WTC11 (cell line): ENCODE measurements at regions of chr11 and their contacts with region 1.

Region 1: DNA sequence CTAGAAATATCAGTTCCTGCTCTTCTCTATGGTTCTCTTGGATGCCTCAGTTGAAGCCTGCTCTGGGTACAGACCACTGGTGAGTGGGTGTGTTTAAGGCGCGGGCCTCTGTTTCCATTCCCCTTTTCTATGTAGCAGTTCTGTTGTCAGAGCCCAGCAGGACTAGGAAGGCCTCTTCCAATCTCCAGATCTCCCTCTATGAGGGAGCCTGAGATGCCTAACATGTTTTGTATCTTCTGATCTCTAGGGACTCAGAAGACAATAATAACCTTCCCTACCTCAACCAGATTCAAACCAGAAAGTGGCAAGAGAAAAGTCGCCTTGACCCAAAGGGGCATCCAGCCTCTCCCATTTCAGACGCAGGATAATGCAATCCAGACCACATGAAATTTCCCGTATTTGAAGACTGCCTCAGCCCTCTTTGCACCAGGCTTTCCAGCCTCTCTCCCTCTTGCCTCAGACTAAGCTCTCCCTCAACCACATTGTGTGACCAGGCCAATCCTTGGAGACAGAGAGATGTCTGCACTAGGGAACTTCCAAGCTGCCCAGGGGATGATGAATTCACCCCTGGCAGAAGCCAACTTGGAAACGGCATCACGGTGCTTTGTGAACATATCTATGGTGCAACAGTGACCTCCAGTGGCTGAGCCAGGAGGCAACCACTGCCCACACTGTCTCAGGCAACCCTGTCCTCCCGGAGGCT is 150.1 kb upstream of the UBASH3B start:
- DNase-seq: peak; percentile 82
- ATAC-seq: peak; percentile 96
- H3K4me3 Mint-ChIP-seq: no peak overlapping the region
- H3K27ac Mint-ChIP-seq: no peak overlapping the region
- H3K4me1 Mint-ChIP-seq: peaks cover 5% of the 10 kb centered on the region
- H3K27me3 Mint-ChIP-seq: no peaks in the 10 kb centered on the region
- CTCF ChIP-seq: peak; percentile 65

Region 2: DNA sequence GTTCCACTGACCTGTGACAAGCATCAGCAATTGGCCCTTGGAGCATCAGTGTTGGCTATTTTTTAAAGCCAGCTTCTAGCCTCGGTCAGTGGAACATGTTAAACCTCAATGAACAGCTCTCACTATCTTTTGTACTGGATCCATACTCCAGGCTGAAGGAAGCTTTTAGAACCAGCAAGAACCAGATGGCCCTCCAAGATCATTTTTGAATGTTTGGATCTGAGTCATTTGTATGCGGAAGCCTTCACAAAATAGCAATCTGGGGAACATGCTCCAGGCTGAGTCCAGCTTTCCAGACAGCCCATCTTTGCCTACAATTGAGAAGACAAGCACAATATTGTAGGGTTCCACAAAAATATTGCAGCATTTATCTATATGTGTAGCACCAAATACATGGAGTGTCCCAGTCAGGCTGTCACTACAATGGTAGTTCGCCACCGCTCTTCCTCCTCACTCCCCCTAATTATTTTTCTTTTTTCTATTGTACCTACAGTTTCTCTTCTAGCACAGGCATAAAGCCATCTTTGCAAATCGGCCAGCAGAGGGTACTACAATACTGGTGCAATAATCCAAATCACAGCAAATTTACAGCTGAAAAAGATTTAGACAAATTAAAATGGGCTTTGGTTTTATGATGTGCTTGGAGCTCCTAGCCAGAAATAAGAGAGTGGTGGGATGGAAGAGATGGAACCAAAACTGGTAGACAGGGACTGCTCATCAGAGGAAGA is 212.0 kb before region 1 on chr11:
- CTCF ChIA-PET with region 1: interaction called, 34 read pairs
- POLR2A ChIA-PET with region 1: no interaction called
- DNase-seq: no peak
- ATAC-seq: no peak
- H3K4me3 Mint-ChIP-seq: no peak overlapping the region
- H3K27ac Mint-ChIP-seq: no peak overlapping the region
- H3K4me1 Mint-ChIP-seq: no peaks in the 10 kb centered on the region
- H3K27me3 Mint-ChIP-seq: no peaks in the 10 kb centered on the region
- CTCF ChIP-seq: no peak; the same call in 1 of the 2 replicates

Region 3: GRCh38 chr11:122556605-122557004 is 51.1 kb after region 1 on chr11:
- CTCF ChIA-PET with region 1: interaction called, 11 read pairs
- POLR2A ChIA-PET with region 1: no interaction called
- DNase-seq: peak; percentile 79
- ATAC-seq: peak; percentile 62
- H3K4me3 Mint-ChIP-seq: peak overlapping the region; percentile 58
- H3K27ac Mint-ChIP-seq: no peak overlapping the region
- H3K4me1 Mint-ChIP-seq: peaks cover 5% of the 10 kb centered on the region; the same call in 1 of the 2 replicates
- H3K27me3 Mint-ChIP-seq: peaks cover 13% of the 10 kb centered on the region
- CTCF ChIP-seq: no peak; the same call in 1 of the 2 replicates